ENCODE measurements at regions of chr7 and their contacts with region 1.

Region 1: DNA sequence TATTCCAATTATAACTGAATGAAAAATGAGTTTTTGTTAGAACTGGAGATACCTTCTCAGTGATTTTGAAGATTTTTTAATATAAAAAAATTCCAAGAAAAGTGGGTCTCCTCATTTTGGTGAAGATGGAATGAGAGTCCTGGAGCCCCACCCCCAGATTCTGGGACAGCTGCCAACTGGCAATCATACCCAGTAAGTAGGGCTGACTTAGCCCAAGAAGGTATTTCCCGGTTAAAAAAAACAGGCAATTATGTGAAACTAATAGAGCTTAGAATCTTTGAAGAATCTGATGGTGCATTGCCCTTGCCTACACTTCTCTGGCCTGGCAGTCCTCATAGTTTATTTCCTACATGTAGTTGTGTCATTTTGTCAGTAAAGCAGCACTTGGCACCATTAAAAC is 52.8 kb upstream of the VWDE start:
- DNase-seq: no peak
- ATAC-seq: no peak

Region 2: DNA sequence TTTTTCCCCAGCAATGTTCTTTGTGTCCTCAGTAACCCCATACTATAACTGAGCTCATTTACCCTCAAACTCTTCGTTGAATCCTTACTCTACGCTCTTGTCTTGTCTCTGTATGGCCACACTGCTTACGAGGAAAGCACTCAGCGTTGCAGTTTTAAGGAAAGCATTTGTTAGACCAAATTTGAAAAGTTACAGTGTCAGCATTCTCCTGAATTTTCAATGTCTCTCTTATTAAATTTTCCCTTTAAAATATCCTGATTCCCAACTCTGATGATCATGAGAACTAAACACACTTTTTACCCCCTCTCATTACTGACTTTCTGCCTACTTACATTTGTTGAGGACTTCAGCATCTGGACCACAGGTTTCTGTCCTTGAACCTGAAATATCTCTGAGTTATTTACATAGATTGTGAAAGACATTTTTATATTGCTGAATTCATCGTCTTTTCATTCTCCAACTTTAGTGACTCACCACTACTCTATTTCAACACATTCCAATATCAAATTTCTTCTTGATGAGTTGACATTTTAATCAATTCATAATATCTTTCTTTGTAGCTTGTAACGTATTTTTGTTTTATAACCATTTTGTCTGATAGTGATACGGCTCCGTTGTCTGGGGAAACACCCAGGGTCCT is 33.0 kb before region 1 on chr7:
- intact Hi-C with region 1: loop called (anchors 2 kb)
- DNase-seq: no peak
- ATAC-seq: no peak

Measured in sciatic nerve (tissue), 2 donors.